Esophagus squamous epithelium (tissue), 5 donors: ENCODE measurements at regions of chr10 and their contacts with region 1.

Region 1: GRCh38 chr10:4849555-4850242 is 23.7 kb downstream of the AKR1E2 start:
- DNase-seq: peak; percentile 28
- H3K4me3 ChIP-seq: peak overlapping the region in 1 of 4 donors; percentile 18
- H3K27ac ChIP-seq: peak overlapping the region; percentile 4 to 68 (median 51)
- H3K4me1 ChIP-seq: peaks cover 9 to 58% (median 26%) of the 10 kb centered on the region in 3 donors
- H3K27me3 ChIP-seq: no peaks in the 10 kb centered on the region
- CTCF ChIP-seq: peak; percentile 92 to 100 (median 98)
- POLR2A ChIP-seq: no peak

Region 2: DNA sequence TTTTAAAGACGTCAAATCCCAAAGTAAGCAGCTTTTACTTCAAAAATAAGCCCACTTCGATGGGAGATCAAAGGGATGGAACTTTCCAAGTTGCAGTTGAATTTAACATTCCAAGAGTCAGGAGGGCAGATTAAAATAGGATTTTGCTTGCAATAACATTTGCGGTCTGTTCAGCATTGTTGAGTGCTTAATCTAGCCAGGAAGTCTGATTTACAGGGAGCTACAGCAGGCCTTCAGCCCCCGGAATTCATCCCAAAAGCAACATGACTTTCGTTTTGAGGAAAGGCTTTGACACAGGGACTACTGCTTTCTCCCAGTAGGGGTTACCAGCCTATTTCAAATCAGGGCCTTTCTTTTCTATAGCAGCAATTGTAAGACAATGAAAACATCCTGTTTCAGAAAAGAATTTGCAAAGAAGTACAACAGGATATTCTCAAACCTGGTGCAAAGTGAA is 1397.5 kb before region 1 on chr10:
- intact Hi-C with region 1: no loop called
- DNase-seq: no peak
- H3K4me3 ChIP-seq: peak overlapping the region in 1 of 4 donors; percentile 30
- H3K27ac ChIP-seq: peak overlapping the region; percentile 49 to 87 (median 82)
- H3K4me1 ChIP-seq: peaks cover 7 to 27% (median 24%) of the 10 kb centered on the region in 3 donors
- H3K27me3 ChIP-seq: no peaks in the 10 kb centered on the region
- CTCF ChIP-seq: peak in 4 of 6 experiments; percentile 19 to 42 (median 34)
- POLR2A ChIP-seq: no peak

Region 3: GRCh38 chr10:4725917-4726606 is 123.6 kb before region 1 on chr10:
- intact Hi-C with region 1: no loop called
- DNase-seq: no peak
- H3K4me3 ChIP-seq: no peak overlapping the region
- H3K27ac ChIP-seq: peak overlapping the region; percentile 50 to 80 (median 69)
- H3K4me1 ChIP-seq: peaks cover 0 to 48% (median 4%) of the 10 kb centered on the region in 3 donors
- H3K27me3 ChIP-seq: no peaks in the 10 kb centered on the region
- CTCF ChIP-seq: no peak
- POLR2A ChIP-seq: no peak

Region 4: DNA sequence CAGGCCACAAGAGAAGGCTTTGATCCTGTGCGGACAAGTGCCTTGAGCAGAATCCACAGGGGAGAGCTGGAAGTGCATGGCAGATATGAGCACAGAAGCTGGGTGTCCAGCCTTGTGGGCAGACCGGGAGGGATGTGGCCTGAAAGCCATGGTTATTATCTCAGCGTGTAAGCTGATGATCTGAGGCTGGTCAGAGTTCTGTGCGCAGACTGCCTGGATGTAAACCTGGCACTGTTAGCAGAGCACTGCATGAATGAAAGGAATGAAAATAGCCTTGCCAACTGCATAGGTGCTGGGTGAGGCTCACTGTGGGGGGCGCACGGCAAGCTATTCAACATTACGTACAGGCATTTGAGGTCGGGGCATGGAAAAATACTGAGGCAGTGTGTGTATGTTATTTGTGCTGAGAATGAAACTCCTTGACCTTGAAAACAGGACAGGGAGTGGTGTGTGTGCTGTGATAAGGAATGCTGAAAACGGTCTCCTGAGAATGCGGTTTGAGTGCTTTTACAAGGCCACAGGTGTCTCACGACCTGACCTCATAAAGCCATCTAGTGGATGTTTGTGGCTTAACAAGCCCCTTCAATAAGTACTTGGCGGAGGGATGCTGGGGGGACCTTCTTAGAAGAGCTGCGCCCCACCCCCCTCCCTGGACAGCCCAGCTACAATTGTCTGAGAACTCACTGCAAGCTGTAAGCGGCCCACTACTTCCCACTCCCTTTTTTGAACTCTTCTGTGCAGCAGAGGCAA is 132.2 kb after region 1 on chr10:
- intact Hi-C with region 1: loop called (anchors 10 kb)
- DNase-seq: no peak
- H3K4me3 ChIP-seq: no peak overlapping the region
- H3K27ac ChIP-seq: peak overlapping the region in 3 of 4 donors; percentile 27 to 53 (median 51)
- H3K4me1 ChIP-seq: peaks cover 0 to 17% (median 0%) of the 10 kb centered on the region in 3 donors
- H3K27me3 ChIP-seq: no peaks in the 10 kb centered on the region
- CTCF ChIP-seq: peak; percentile 26 to 74 (median 54)
- POLR2A ChIP-seq: no peak

Region 5: GRCh38 chr10:5094265-5095205 is 244.8 kb after region 1 on chr10 and contains the start of gene AKR1C3:
- intact Hi-C with region 1: loop called (anchors 5 kb)
- DNase-seq: no peak
- H3K4me3 ChIP-seq: peak within 1 kb of the TSS; percentile 35 to 70 (median 54)
- H3K27ac ChIP-seq: peak within 1 kb of the TSS; percentile 69 to 85 (median 81)
- H3K4me1 ChIP-seq: peaks cover 0 to 52% (median 6%) of the 10 kb centered on the region in 3 donors
- H3K27me3 ChIP-seq: no peaks in the 10 kb centered on the region
- CTCF ChIP-seq: peak; percentile 50 to 87 (median 70)
- POLR2A ChIP-seq: peak in 2 of 4 donors; percentile 28 to 29
- total RNA-seq, gene AKR1C3: 45.6 to 149 (median 91.0) TPM

Region 6: GRCh38 chr10:5343562-5343961 is 493.9 kb after region 1 on chr10:
- intact Hi-C with region 1: no loop called
- DNase-seq: no peak
- H3K4me3 ChIP-seq: no peak overlapping the region
- H3K27ac ChIP-seq: no peak overlapping the region
- H3K4me1 ChIP-seq: no peaks in the 10 kb centered on the region
- H3K27me3 ChIP-seq: no peaks in the 10 kb centered on the region
- CTCF ChIP-seq: no peak
- POLR2A ChIP-seq: no peak

Region 7: GRCh38 chr10:5434017-5434753 is 584.5 kb after region 1 on chr10:
- intact Hi-C with region 1: loop called (anchors 10 kb)
- DNase-seq: no peak
- H3K4me3 ChIP-seq: no peak overlapping the region
- H3K27ac ChIP-seq: no peak overlapping the region
- H3K4me1 ChIP-seq: no peaks in the 10 kb centered on the region
- H3K27me3 ChIP-seq: no peaks in the 10 kb centered on the region
- CTCF ChIP-seq: peak; percentile 19 to 78 (median 58)
- POLR2A ChIP-seq: no peak